Posterior vena cava (tissue), 2 donors: ENCODE measurements at regions of chr17 and their contacts with region 1.

Region 1: DNA sequence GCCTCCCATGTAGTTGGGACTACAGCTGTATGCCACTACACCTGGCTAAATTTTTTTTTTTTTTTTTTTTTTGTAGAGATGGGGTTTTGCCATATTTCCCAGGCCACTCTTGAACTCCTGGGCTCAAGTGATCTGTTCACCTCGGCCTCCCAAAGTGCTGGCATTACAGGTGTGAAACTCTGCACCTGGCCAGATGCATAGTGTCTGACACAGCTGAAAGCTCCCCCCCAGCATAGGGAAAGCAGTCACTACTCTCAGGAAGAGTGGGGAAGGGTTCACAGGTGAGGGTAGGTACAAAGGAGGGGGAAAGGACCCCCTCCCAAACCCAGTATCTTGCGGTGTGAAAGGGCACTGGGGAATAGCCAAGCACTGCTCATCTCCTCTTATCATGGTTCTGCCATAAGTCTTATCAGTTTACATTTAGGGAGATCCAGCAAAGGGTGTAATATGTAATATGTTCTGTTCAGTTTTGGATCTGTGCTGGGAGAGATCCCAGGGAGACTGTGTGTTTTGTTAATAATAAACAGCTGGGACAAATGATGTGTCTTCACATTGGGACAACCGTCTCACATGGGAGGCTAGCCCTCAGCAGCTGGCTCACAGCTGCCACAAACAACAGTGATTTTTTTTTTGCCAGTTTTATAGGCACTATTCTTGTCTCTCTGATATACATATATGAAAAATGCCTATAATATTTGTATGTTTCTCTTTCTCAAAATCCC is 6.8 kb upstream of the CAVIN1 start:
- DNase-seq: peak; percentile 5

Region 2: GRCh38 chr17:42459256-42459800 is 29.4 kb after region 1 on chr17:
- intact Hi-C with region 1: loop called in 1 of 2 experiments (anchors 1 kb)
- DNase-seq: peak; percentile 86

Region 3: DNA sequence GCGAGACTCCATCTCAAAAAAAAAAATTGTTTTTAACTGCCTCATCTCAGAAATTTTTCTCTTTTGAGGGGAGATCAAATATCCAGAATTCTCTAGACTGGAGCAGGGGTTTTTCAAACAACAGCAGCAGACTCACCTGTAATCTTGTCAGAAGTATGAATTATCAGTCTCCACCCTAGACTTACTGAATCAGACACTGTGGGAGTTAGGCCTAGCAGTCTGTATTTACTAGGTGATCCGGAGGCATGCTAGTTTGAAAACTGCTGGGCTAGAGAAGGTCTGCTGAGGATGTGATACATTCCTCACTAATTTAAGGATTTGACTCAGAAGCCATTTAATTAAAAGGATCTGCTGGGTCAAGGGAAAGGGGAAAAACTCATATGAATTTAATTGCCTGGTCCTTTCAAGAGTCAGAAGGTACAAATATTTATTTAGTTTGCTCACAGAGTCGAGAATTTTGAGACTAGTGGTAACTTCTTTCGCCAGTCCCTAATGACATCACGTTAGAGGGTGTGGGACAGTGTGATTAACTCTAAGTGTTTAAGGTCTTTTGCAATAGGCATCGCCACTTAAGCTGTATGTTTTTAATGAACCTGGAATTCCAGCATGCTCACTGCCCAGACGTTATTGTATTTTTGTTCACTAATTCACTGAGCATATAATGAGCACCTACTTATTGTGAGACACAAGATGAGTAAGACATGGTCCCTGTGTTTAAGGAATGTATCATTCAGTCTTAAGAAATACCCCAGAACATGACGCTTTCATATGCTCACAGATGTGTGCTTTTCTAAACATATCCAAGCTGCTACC is 43.0 kb after region 1 on chr17:
- intact Hi-C with region 1: no loop called
- DNase-seq: no peak

Region 4: GRCh38 chr17:42494673-42495072 is 64.8 kb after region 1 on chr17:
- intact Hi-C with region 1: no loop called
- DNase-seq: no peak

Region 5: DNA sequence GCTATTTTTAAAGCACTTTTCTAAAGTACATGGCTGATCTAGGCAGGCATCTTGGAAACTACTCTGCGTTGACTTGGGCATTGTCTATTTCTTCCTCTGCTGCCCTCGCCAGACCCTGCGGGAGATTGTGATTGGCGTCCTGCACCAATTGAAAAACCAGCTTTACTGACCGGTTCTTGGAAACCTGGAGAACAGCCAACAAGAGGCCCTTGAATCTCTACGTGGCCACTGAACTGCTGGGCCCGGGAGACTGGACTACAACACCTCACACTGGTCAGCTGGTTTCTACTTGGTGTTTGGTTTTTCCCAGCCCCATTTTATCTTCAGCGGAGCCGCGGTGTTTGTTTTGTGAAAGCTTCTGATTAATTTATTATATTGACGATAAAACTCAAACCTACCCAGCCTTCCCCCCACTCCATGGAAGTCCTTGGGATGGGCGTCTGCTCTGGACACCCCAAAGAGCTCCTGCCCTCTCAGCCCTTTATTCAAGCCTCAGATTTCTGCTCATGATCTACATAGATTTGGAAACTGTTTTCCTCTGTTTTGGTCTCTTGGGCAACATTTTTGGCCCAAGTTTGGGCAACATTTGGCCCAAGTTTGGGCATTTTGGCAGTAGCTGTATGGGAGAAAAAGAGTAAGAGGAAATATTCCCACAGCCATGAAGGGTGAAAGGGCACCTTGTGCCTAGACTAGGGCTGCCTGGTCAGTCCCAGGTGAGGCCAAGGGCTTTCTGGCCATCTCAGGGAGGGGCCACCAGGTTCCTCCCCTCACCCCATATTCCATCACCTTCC is 141.7 kb after region 1 on chr17:
- intact Hi-C with region 1: no loop called
- DNase-seq: no peak